ENCODE measurements at regions of chr3 and their contacts with region 1.

Region 1: DNA sequence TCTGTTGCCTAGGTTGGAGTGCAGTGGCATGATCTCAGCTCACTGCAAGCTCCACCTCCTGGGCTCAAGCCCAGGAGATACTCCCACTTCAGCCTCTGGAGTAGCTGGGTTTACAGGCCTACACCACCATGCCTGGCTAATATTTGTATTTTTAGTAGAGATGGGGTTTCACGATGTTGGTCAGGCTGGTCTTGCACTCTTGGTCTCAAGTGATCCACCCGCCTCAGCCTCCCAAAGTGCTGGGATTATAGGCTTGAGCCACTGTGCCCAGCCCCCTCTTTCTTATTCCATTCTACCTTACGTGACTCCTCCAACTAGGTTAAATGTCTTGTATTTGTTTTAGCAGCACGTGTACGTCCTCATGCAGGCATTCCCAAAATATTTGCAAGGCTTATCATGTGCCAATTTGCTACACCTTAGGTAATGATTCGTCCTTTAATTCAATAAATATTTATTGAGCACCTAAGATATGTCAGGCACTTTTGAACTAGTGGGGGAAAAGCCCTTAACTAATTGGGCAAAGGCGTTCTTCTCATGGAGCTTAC is 14.9 kb upstream of the MAGI1 start:
- DNase-seq: peak; percentile 15
- H3K4me3 Mint-ChIP-seq: no peak overlapping the region
- H3K27ac Mint-ChIP-seq: peak overlapping the region; percentile 3
- H3K4me1 Mint-ChIP-seq: peaks cover 34% of the 10 kb centered on the region
- H3K27me3 Mint-ChIP-seq: no peaks in the 10 kb centered on the region
- CTCF ChIP-seq: no peak

Region 2: DNA sequence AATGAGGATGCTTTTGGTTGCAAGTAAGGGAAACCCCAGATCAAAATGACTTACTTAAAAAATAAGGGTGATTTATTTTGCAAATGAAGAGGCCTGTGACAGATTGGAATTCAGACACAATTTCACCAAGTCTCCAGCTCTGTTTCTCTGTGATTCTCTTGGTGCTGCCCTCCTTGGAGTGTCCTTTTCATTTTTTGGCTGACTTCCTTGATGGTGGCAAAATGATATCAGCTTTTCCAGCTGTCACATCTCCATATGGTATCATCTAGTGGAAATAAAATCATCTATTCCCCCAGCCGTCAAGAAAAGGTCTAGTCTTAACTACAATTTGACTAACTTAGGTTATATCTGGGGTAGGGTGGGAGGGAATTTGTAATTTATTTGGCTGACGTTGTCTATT is 98.7 kb after region 1 on chr3:
- CTCF ChIA-PET with region 1: interaction called, 13 read pairs
- intact Hi-C with region 1: no loop called
- DNase-seq: no peak
- H3K4me3 Mint-ChIP-seq: no peak overlapping the region
- H3K27ac Mint-ChIP-seq: no peak overlapping the region
- H3K4me1 Mint-ChIP-seq: no peaks in the 10 kb centered on the region
- H3K27me3 Mint-ChIP-seq: no peaks in the 10 kb centered on the region
- CTCF ChIP-seq: no peak

Measured in Calu3 (cell line).